ENCODE measurements at regions of chr17 and their contacts with region 1.

Region 1: DNA sequence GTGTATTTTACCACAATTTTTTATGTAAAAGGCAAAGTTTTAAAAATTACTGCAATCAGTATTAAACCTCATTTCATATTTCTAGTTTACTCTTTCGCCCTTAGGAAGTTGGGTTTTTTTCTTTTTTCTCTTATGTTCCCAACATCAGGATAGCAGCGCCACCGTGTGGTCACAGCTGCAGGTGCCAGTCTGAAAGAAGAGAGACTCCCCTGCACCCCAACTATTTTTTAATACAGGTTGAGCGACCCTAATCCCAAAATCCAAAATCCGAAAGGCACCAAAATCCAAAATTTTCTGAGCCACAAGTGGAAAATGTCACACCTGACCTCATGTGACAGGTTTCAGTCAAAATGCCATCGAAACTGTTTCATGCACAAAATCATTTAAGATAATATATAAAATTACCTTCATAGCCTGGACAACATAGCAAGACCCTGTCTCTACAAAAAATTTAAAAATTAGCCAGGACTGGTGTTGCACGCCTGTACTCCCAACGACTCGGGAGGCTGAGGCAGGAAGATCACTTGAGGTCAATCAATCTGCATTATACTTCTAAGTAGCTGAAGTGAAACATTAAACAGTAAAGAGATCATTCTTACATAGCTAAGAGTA is 21.8 kb upstream of the ASGR2 start:
- DNase-seq: peak; percentile 87
- ATAC-seq: no peak

Region 2: GRCh38 chr17:7045909-7046724 is 90.3 kb before region 1 on chr17:
- intact Hi-C with region 1: loop called (anchors 5 kb)
- DNase-seq: no peak
- ATAC-seq: peak; percentile 43

Region 3: DNA sequence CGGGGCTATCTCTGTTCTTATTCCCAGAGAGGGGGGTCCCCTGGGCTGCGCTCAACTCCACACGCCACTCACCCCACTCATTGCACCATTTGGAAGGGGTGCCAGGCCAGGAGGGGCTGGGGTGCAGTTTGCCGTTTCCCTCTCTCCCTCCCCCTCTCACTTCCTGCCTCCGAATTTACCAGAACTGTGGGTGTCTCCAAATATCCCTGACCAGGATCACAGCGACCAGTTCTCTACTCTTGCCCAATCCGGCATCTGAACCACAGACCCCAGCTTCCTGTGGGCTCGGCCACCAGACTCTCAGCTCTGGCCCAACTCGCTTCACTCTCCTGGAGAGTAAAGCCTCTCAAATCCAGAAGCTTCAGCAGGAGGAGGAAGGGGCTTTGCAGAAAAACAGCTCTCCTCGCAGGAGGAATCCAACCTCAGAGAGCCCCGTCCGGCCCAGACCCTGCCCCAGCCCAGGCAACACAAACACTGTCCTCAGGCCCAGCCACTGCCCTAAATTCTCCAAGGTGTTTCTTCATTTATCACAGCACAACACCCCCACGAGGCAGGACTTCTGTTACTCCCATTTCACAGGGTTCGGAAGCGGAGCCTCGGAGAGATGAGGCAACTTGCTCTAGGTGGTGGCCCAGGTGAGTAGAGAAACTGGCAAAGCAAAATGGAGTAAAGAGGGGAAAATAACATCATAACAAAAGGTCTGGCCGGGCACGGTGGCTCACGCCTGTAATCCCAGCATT is 21.3 kb before region 1 on chr17:
- intact Hi-C with region 1: no loop called
- DNase-seq: no peak
- ATAC-seq: peak; percentile 57